Dendritic cell treated with granulocyte-macrophage colony-stimulating factor and Interleukin-4, amounts not matched to agents 40 ng/mL and 50 ng/mL, for 4 days (primary cell): ENCODE measurements at regions of chr10 and their contacts with region 1.

Region 1: DNA sequence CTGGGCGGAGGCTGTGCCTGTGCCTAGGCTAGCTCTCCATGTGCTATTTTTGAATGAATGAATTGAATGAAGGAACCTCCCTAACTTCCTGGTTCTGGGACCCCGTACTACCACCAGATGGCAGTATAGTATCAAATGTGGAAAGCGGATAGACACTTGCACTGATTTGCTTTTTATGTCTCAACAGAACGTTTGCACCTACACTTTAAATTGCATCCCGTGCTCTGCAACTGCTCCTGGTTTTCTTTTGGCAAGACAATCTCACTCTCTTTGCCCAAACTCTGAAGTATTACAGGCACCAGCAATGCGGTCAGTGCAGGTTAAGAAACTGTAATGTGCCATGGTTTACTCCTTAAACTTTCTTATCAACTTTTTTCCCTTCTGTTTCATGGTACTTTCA is 6.5 kb downstream of the FZD8 start:
- H3K4me3 Mint-ChIP-seq: no peak overlapping the region
- H3K27ac Mint-ChIP-seq: no peak overlapping the region
- H3K4me1 Mint-ChIP-seq: peaks cover 12% of the 10 kb centered on the region
- H3K27me3 Mint-ChIP-seq: peaks cover 44% of the 10 kb centered on the region

Region 2: DNA sequence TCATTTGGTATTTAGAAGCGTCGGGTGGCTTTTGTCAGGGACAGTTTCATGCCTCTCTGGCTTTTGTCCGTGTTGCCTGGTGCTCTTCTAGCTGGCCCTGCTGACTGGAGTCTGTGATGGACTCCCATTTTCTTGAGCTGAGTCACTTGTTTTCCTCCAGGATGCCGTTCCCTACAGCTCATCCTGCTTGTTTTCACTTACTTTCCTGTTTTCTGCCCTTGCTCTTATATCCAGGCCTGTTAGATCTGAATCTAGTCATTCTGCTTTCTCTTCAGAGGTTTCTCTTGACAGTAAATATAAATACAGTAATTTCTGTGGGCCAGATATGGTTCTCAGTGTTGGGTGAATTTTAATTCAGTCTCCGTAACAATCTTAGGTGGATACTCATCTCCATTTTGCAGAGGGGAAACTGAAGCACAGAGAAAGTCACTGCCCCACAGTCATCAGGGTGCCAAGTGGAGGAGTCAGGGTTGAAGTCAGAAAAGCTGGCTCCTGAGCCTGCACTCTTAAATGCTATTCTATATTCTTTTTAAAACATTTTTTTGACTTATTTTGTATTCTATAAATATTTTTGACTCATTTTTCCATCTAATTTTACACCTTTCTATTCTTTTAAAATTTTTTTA is 213.9 kb before region 1 on chr10:
- intact Hi-C with region 1: no loop called
- H3K4me3 Mint-ChIP-seq: no peak overlapping the region
- H3K27ac Mint-ChIP-seq: no peak overlapping the region
- H3K4me1 Mint-ChIP-seq: peaks cover 62% of the 10 kb centered on the region
- H3K27me3 Mint-ChIP-seq: no peaks in the 10 kb centered on the region

Region 3: GRCh38 chr10:35993591-35994515 is 358.3 kb after region 1 on chr10:
- intact Hi-C with region 1: no loop called
- H3K4me3 Mint-ChIP-seq: no peak overlapping the region
- H3K27ac Mint-ChIP-seq: no peak overlapping the region
- H3K4me1 Mint-ChIP-seq: no peaks in the 10 kb centered on the region
- H3K27me3 Mint-ChIP-seq: no peaks in the 10 kb centered on the region

Region 4: GRCh38 chr10:36779234-36779846 is 1143.8 kb after region 1 on chr10:
- intact Hi-C with region 1: loop called (anchors 5 kb)
- H3K4me3 Mint-ChIP-seq: no peak overlapping the region
- H3K27ac Mint-ChIP-seq: no peak overlapping the region
- H3K4me1 Mint-ChIP-seq: no peaks in the 10 kb centered on the region
- H3K27me3 Mint-ChIP-seq: no peaks in the 10 kb centered on the region

Region 5: GRCh38 chr10:36880898-36881297 is 1245.3 kb after region 1 on chr10:
- intact Hi-C with region 1: loop called (anchors 5 kb)
- H3K4me3 Mint-ChIP-seq: no peak overlapping the region
- H3K27ac Mint-ChIP-seq: no peak overlapping the region
- H3K4me1 Mint-ChIP-seq: no peaks in the 10 kb centered on the region
- H3K27me3 Mint-ChIP-seq: peaks cover 2% of the 10 kb centered on the region

Region 6: GRCh38 chr10:37495415-37495814 is 1859.8 kb after region 1 on chr10:
- intact Hi-C with region 1: loop called (anchors 5 kb)
- H3K4me3 Mint-ChIP-seq: no peak overlapping the region
- H3K27ac Mint-ChIP-seq: no peak overlapping the region
- H3K4me1 Mint-ChIP-seq: no peaks in the 10 kb centered on the region
- H3K27me3 Mint-ChIP-seq: no peaks in the 10 kb centered on the region